ENCODE measurements at regions of chr1 and their contacts with region 1.

Region 1: DNA sequence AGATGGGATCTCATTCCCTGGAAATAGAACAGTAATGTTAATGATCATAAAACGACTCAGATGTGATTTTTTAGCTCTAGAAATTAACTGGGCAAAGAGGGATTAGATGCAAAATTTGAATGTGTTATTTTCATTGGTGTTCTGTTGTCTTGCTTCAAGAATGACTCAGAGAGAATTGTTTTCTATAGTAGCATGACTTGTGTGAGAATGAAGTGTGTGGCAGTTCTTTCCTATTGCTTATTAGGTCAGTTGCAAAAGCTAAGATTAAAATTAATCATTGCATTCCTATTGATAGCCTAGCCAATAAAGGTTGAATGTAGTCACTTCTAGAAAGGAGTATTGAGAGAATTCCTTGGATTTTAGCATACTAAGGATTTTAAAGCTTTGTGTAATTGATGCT is 22.9 kb downstream of the SPEN start:
- DNase-seq: no peak
- CTCF ChIP-seq: no peak

Region 2: GRCh38 chr1:15885701-15886610 is 15.5 kb after region 1 on chr1:
- CTCF ChIA-PET with region 1: interaction called, 11 read pairs
- POLR2A ChIA-PET with region 1: no interaction called
- DNase-seq: peak; percentile 33
- CTCF ChIP-seq: no peak

Region 3: DNA sequence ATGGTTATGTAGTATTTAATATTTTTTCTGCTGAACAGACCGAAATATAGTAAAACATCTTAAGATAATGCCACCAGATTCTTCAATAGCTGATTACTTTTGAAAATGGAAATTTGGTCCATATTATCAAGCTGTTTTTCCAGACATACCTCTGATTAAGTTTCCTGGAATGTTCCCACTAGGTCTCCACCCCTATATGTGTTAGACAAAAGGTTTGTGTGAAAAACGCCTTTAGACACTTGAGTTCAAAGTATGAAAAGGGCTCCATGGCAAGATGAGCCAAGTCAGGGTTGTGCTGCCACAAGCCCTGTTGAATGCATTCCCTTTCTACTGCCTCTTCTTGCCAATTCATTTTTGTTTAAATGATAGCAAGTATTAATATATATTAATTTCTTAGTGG is 52.8 kb after region 1 on chr1:
- CTCF ChIA-PET with region 1: no interaction called
- POLR2A ChIA-PET with region 1: no interaction called
- DNase-seq: no peak
- CTCF ChIP-seq: no peak

Measured in GM10248 (cell line).